ENCODE measurements at regions of chr12 and their contacts with region 1.

Region 1: GRCh38 chr12:116277393-116278278 is at the start of gene MED13L:
- DNase-seq: peak; percentile 96
- H3K4me3 Mint-ChIP-seq: peak within 1 kb of the TSS; percentile 95
- H3K27ac Mint-ChIP-seq: peak within 1 kb of the TSS; percentile 90
- H3K4me1 Mint-ChIP-seq: peaks cover 43% of the 10 kb centered on the region
- H3K27me3 Mint-ChIP-seq: peaks cover 1% of the 10 kb centered on the region
- total RNA-seq, gene MED13L: 55.1 and 62.9 TPM in 2 replicates

Region 2: GRCh38 chr12:115632308-115632707 is 645.3 kb before region 1 on chr12:
- intact Hi-C with region 1: no loop called
- DNase-seq: no peak
- H3K4me3 Mint-ChIP-seq: no peak overlapping the region
- H3K27ac Mint-ChIP-seq: no peak overlapping the region
- H3K4me1 Mint-ChIP-seq: no peaks in the 10 kb centered on the region
- H3K27me3 Mint-ChIP-seq: no peaks in the 10 kb centered on the region

Region 3: GRCh38 chr12:116142936-116143898 is 134.4 kb before region 1 on chr12:
- intact Hi-C with region 1: loop called (anchors 2 kb)
- DNase-seq: no peak
- H3K4me3 Mint-ChIP-seq: peak overlapping the region; percentile 2
- H3K27ac Mint-ChIP-seq: peak overlapping the region; percentile 62
- H3K4me1 Mint-ChIP-seq: peaks cover 45% of the 10 kb centered on the region
- H3K27me3 Mint-ChIP-seq: no peaks in the 10 kb centered on the region

Region 4: GRCh38 chr12:116194935-116195431 is 82.7 kb before region 1 on chr12:
- intact Hi-C with region 1: no loop called
- DNase-seq: peak; percentile 87
- H3K4me3 Mint-ChIP-seq: peak overlapping the region; percentile 65
- H3K27ac Mint-ChIP-seq: peak overlapping the region; percentile 82
- H3K4me1 Mint-ChIP-seq: peaks cover 36% of the 10 kb centered on the region
- H3K27me3 Mint-ChIP-seq: no peaks in the 10 kb centered on the region

Region 5: DNA sequence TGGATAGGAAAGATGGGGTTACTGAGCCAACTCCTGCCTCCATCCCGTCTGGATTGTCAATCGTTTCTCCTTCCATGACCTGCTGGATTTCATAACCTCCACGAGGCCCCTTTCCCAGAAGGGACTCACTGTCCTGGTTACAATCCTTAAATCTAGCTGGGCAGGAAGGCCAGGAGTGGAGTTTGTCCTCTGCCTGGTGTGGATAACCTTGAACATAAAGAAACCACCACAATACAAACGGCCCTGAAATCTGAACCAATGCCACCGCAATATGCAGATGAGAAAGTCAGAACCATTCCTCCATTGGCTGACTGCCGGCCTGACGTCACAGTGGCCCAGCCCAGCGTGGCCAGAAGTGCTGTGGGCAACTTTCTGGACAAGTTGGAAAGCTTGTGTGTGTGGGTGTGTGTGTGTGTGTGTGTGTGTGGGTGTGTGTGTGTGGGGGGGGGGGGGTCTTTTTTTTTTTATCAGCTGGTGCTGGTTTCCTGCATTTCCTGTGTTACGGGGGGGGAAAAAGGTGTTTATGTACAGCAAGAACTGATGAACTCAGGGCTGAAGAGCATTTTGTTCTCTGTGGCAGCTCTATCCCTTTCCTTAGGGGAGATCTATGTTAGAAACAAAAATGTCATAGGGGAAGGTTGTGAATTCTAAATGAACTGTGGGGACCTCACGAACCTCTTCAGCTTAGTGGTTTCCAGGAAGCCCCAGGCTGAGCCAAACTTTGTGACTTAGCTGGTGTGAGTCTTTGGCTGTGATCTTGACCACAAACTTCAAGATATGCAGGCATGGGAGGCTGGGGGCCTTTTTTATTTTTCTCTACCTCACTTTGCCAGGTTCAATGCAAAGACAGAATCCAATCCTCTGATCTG is 81.5 kb after region 1 on chr12:
- intact Hi-C with region 1: loop called (anchors 5 kb)
- DNase-seq: peak; percentile 90
- H3K4me3 Mint-ChIP-seq: peak overlapping the region; percentile 78
- H3K27ac Mint-ChIP-seq: peak overlapping the region; percentile 85
- H3K4me1 Mint-ChIP-seq: peaks cover 24% of the 10 kb centered on the region
- H3K27me3 Mint-ChIP-seq: no peaks in the 10 kb centered on the region

Region 6: DNA sequence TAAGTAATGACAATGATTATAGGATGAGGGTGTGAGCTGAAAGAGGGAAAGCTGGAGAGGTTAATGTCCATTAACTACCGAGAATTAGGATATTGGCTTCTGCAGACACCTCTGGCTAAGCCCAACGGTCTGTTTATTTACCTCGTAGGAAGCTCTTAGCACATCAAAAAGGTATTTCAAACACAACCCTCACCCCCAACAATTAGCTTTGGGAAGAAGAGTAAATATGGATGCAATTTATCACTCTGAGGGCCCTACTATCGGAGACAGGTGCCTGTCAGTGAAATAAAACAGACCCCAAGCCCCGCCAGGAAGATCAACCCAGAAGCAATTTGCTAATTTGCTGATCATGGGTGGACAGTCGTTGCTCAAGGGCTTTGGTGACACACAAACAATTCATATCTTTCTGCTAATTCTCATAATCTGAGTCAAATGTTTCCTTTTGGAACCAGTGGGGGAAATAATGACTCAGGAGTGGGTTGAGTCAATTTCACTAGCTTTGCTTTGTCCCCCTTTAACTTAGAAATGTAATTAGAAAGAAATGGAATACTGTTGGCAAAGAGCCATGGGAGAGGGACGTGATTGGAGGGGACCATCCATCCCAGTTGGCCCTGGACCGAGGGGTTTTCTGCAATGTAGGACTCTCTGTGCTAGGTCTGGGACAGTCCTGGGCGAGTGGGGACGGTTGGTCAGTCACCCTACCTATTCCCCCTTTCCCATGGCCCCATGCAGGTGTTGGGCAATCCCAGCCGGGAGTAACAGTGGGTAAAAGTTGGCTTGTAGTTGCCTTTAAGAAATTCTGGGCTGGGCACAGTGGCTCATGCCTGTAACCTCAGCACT is 98.9 kb after region 1 on chr12:
- intact Hi-C with region 1: no loop called
- DNase-seq: no peak
- H3K4me3 Mint-ChIP-seq: no peak overlapping the region
- H3K27ac Mint-ChIP-seq: no peak overlapping the region
- H3K4me1 Mint-ChIP-seq: peaks cover 1% of the 10 kb centered on the region
- H3K27me3 Mint-ChIP-seq: no peaks in the 10 kb centered on the region

Region 7: DNA sequence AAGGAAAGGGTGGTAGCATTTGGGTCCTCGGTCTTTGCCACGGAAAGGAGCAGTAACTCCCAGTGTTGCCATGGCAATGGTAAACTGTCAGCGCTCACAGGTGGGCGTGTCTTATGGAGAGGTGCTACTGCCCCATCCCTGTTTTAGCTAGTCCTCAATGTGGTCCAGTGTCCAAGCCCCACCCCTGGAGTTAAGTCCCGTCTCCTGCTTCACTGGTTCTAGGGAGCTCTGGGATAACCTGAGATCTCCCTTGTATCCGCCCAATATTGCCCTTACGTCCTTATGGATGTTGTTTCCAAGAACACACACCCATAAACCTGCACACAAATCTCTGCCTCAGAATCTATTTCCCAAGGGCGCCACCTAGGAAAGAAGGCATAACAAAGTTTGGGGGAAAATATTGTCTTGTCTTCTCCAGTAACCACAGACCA is 396.1 kb after region 1 on chr12:
- intact Hi-C with region 1: loop called (anchors 2 kb)
- DNase-seq: peak; percentile 70
- H3K4me3 Mint-ChIP-seq: peak overlapping the region; percentile 36
- H3K27ac Mint-ChIP-seq: peak overlapping the region; percentile 85
- H3K4me1 Mint-ChIP-seq: peaks cover 42% of the 10 kb centered on the region
- H3K27me3 Mint-ChIP-seq: no peaks in the 10 kb centered on the region